Right ventricle myocardium superior (tissue), 1 donor: ENCODE measurements at regions of chr18 and their contacts with region 1.

Region 1: DNA sequence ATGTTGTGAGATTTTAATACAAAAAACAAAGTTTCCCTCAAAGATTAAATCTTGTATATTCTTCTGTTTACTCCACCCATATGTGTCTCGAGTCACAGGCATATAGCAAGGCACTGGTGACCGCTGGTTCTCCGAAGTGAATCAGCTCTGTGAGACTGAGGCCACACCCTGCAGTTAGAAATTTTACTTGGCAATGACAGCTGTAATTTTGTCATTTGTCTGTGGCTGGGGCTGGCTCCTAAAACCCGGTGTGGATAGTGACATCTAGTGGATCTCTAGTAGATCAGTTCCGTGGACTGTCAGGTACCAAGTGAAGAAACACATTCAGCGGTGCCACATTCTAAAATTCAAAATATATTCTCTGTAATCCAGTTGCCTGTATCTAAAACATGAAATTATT is 278.0 kb downstream of the NEDD4L start:
- DNase-seq: peak; percentile 60
- ATAC-seq: peak; percentile 95

Region 2: GRCh38 chr18:58015065-58015780 is 306.8 kb before region 1 on chr18:
- intact Hi-C with region 1: no loop called
- DNase-seq: no peak
- ATAC-seq: no peak

Region 3: DNA sequence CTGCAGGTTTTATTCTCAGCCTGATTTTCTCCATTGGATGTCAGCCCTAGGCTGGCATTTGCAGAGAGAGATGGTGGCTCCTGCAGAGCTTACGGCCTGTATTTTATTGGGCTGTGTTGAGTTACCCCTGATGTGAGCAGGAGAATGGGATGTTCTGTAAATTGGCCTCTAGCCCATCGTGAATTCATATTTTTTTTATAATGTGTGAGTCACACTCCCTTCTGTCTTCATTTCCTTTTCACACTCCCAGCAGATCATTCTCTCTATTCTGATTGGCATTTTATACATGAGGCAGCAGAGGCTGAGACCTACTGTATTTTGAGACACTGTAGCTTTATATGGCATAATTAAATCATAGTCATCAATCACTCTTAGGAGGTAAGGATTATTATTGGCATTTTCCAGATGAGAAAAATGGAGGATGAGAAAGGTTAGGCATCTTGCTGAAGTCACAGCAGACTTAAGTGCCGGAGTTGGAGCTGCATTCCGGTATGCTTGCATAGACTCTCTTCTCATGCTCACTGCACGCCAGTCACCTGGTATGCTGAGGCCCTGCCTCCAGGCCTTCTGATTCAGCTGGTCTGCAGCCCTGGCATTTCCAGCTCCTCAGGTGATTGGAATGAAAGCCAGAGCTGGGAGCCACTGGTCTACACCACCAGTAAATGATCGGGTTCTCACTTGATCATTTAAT is 135.6 kb before region 1 on chr18:
- intact Hi-C with region 1: loop called (anchors 5 kb)
- DNase-seq: no peak
- ATAC-seq: no peak

Region 4: GRCh38 chr18:58257461-58257860 is 64.5 kb before region 1 on chr18:
- intact Hi-C with region 1: loop called (anchors 5 kb)
- DNase-seq: no peak
- ATAC-seq: peak; percentile 9